ENCODE measurements at regions of chr4 and their contacts with region 1.

Region 1: DNA sequence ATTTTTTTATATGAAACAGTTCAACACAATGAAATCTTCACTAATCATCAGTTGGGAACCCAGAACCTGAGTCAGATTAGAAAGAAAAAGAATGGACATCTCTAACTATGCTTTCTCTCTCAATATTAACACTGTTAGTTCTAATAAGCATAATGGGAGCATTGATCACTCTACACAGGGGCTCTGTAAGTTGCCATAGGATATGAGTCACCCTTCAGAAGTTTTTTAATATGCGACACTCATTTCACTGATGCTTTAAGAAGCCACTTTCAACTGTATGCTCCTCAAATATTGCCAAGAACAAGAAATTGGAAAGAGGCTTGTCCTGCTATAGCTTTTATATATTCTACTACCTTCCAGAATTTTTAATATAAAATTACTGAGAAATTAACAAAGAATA is 187.0 kb downstream of the AASDH start:
- DNase-seq: peak; percentile 56
- ATAC-seq: peak; percentile 74
- H3K4me3 ChIP-seq: no peak overlapping the region
- H3K27ac ChIP-seq: no peak overlapping the region
- H3K4me1 ChIP-seq: no peaks in the 10 kb centered on the region
- H3K27me3 ChIP-seq: peaks cover 21% of the 10 kb centered on the region; the same call in 1 of the 2 replicates
- CTCF ChIP-seq: no peak

Region 2: GRCh38 chr4:55887594-55887993 is 312.7 kb before region 1 on chr4:
- CTCF ChIA-PET with region 1: interaction called, 10 read pairs
- POLR2A ChIA-PET with region 1: no interaction called
- intact Hi-C with region 1: no loop called
- DNase-seq: peak; percentile 22
- ATAC-seq: peak; percentile 56
- H3K4me3 ChIP-seq: no peak overlapping the region
- H3K27ac ChIP-seq: no peak overlapping the region
- H3K4me1 ChIP-seq: no peaks in the 10 kb centered on the region
- H3K27me3 ChIP-seq: no peaks in the 10 kb centered on the region
- CTCF ChIP-seq: peak; percentile 44; the same call in 1 of the 2 replicates

Measured in PC-3 (cell line).